CD8-positive, alpha-beta memory T cell (primary cell): ENCODE measurements at regions of chr9 and their contacts with region 1.

Region 1: DNA sequence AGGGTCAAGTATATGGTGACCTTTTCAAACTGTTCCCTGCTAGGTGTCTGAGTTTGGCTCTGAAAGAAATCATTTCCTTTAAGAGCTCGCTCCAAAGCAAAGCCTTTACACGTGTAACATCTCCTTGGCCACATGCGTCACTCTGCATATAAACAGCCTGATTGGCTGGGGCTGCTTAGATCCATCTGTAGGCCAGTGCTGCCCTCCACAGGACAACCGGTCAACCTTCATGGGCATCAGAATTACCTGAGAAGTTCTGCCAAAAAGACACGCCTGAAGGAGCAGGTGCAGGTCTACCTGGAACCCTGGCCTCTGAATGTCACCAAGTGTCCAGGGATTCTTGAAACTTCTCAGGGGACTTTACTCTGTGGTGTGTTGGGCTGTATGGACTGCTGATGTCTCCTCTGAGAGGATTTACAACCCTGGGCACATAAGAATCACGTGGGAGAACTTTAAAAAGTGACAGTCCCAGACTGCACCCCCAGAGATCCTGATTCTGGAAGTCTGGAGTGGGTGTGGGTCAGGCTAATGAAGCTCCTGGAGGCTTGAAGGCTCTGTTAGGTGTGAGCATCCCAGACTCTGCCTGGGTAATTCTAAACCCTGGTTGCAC is 497.6 kb downstream of the GADD45G start:
- DNase-seq: peak; percentile 34 to 82 (median 60)
- H3K4me3 ChIP-seq: no peak overlapping the region
- H3K4me3 Mint-ChIP-seq: no peak overlapping the region
- H3K27ac ChIP-seq: no peak overlapping the region
- H3K27ac Mint-ChIP-seq: no peak overlapping the region
- H3K4me1 ChIP-seq: no peaks in the 10 kb centered on the region
- H3K4me1 Mint-ChIP-seq: peaks cover 4 to 6% (median 5%) of the 10 kb centered on the region in 3 donors
- H3K27me3 ChIP-seq: no peaks in the 10 kb centered on the region
- H3K27me3 Mint-ChIP-seq: no peaks in the 10 kb centered on the region

Region 2: GRCh38 chr9:89597711-89598625 is 504.4 kb before region 1 on chr9:
- CTCF ChIA-PET with region 1: interaction called, 20 read pairs
- POLR2A ChIA-PET with region 1: no interaction called
- DNase-seq: peak in 3 of 5 donors; percentile 23 to 38 (median 24)
- H3K4me3 ChIP-seq: no peak overlapping the region
- H3K4me3 Mint-ChIP-seq: no peak overlapping the region
- H3K27ac ChIP-seq: no peak overlapping the region
- H3K27ac Mint-ChIP-seq: no peak overlapping the region
- H3K4me1 ChIP-seq: peaks cover 3% of the 10 kb centered on the region
- H3K4me1 Mint-ChIP-seq: peaks cover 2 to 4% (median 2%) of the 10 kb centered on the region in 3 donors
- H3K27me3 ChIP-seq: no peaks in the 10 kb centered on the region
- H3K27me3 Mint-ChIP-seq: peaks cover 23 to 31% of the 10 kb centered on the region in 2 donors

Region 3: DNA sequence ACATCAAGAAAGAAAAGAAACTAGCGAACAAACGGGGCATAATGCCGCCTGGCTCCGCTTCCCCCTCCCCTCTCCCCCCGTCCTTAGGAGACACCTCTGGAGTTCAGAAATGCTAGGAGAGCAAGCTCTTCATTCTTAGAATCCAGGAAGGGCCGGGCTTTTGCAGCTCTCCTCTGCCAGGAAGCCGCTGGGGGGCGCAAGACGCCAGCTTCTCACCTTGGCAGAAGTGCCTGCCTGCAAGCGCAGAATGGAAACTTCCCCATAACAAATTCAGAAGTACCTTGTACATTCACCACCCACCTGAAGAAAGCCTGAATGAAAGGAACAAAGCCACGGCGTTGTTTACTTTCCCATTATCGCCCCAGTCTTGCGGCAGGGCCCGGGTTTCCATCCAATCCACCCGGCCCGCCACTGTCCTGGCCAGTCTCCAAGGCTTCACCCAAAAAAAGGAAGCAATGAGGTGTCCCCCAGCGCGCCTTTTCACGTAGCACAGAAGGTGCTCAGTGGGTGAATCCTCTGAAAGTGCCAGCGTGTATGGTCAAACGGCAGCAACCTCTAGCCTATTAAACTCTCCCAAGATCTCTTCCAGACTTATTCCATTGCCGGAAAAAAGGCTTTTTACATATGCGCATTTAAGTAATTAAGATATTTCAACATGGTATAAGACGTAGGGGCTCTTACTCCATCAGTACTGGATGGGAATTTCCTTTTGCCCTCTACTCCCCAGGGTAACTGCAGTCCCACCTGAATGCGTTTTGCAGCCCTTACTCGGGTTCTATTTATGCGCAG is 499.2 kb before region 1 on chr9:
- CTCF ChIA-PET with region 1: interaction called, 20 read pairs
- POLR2A ChIA-PET with region 1: no interaction called
- DNase-seq: peak; percentile 72 to 87 (median 74)
- H3K4me3 ChIP-seq: peak overlapping the region; percentile 69
- H3K4me3 Mint-ChIP-seq: peak overlapping the region; percentile 70 to 89 (median 77)
- H3K27ac ChIP-seq: no peak overlapping the region
- H3K27ac Mint-ChIP-seq: peak overlapping the region in 7 of 8 donors; percentile 0 to 85 (median 70)
- H3K4me1 ChIP-seq: peaks cover 27% of the 10 kb centered on the region
- H3K4me1 Mint-ChIP-seq: peaks cover 21 to 38% (median 24%) of the 10 kb centered on the region in 3 donors
- H3K27me3 ChIP-seq: peaks cover 7% of the 10 kb centered on the region
- H3K27me3 Mint-ChIP-seq: peaks cover 23 to 35% of the 10 kb centered on the region in 2 donors

Region 4: DNA sequence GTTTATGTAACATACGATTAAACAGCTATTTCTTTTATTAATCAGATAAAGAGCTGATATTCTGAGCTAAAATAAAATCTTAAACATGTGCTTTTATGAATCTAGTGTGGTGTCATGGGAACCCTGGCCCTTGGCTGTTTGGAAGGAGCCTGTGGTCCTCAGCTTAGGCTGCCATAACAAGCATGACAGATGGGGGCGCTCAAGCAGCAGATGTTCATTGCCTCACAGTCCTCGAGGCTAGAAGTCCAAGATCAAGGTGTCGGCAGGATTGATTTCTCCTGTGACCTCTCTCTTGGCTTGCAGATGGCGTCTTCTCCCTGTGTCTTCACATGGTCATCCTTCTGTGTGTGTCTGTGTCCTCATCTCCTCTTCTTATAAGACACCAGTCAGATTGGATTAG is 49.4 kb before region 1 on chr9:
- CTCF ChIA-PET with region 1: no interaction called
- POLR2A ChIA-PET with region 1: no interaction called
- DNase-seq: no peak
- H3K4me3 ChIP-seq: no peak overlapping the region
- H3K4me3 Mint-ChIP-seq: no peak overlapping the region
- H3K27ac ChIP-seq: no peak overlapping the region
- H3K27ac Mint-ChIP-seq: no peak overlapping the region
- H3K4me1 ChIP-seq: no peaks in the 10 kb centered on the region
- H3K4me1 Mint-ChIP-seq: no peaks in the 10 kb centered on the region
- H3K27me3 ChIP-seq: no peaks in the 10 kb centered on the region
- H3K27me3 Mint-ChIP-seq: peaks cover 2 to 56% of the 10 kb centered on the region in 2 donors

Region 5: GRCh38 chr9:90169490-90169889 is 67.1 kb after region 1 on chr9:
- CTCF ChIA-PET with region 1: no interaction called
- POLR2A ChIA-PET with region 1: no interaction called
- DNase-seq: no peak
- H3K4me3 ChIP-seq: no peak overlapping the region
- H3K4me3 Mint-ChIP-seq: no peak overlapping the region
- H3K27ac ChIP-seq: no peak overlapping the region
- H3K27ac Mint-ChIP-seq: no peak overlapping the region
- H3K4me1 ChIP-seq: no peaks in the 10 kb centered on the region
- H3K4me1 Mint-ChIP-seq: no peaks in the 10 kb centered on the region
- H3K27me3 ChIP-seq: no peaks in the 10 kb centered on the region
- H3K27me3 Mint-ChIP-seq: peaks cover 0 to 33% of the 10 kb centered on the region in 2 donors